Endothelial cell of umbilical vein (primary cell): ENCODE measurements at regions of chr1 and their contacts with region 1.

Region 1: GRCh38 chr1:192167911-192168700 is 9.8 kb downstream of the RGS18 start:
- DNase-seq: peak; percentile 69
- H3K4me3 ChIP-seq: no peak overlapping the region
- H3K27ac ChIP-seq: peak overlapping the region; percentile 98
- H3K4me1 ChIP-seq: peaks cover 37% of the 10 kb centered on the region
- H3K27me3 ChIP-seq: no peaks in the 10 kb centered on the region
- CTCF ChIP-seq: no peak
- POLR2A ChIP-seq: no peak

Region 2: DNA sequence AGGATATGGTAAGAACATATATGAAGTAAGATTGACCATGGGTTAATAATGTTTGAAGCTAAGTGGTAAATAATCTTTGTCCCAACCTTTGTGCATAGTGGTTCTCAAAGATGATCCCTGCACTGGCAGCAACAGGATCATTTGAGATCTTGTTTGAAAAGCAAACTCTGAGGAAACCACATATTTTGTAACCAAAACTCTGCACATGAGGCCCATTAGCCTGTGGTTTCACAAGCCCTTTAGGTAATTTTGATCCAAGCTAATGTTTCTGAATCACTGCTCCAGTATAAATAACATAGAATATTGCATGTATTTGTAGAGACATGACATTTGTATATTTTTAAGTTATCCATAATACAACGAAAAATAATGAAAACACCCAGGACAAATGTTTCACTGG is 157.7 kb before region 1 on chr1:
- CTCF ChIA-PET with region 1: no interaction called
- POLR2A ChIA-PET with region 1: no interaction called
- dilution Hi-C with region 1: no loop called
- intact Hi-C with region 1: loop called (anchors 5 kb)
- DNase-seq: no peak
- H3K4me3 ChIP-seq: no peak overlapping the region
- H3K27ac ChIP-seq: no peak overlapping the region
- H3K4me1 ChIP-seq: no peaks in the 10 kb centered on the region
- H3K27me3 ChIP-seq: no peaks in the 10 kb centered on the region
- CTCF ChIP-seq: no peak
- POLR2A ChIP-seq: no peak

Region 3: GRCh38 chr1:192225703-192226102 is 57.6 kb after region 1 on chr1:
- CTCF ChIA-PET with region 1: interaction called, 3 read pairs
- POLR2A ChIA-PET with region 1: no interaction called
- dilution Hi-C with region 1: no loop called
- intact Hi-C with region 1: loop called (anchors 5 kb)
- DNase-seq: peak; percentile 73
- H3K4me3 ChIP-seq: no peak overlapping the region
- H3K27ac ChIP-seq: peak overlapping the region; percentile 47
- H3K4me1 ChIP-seq: peaks cover 12% of the 10 kb centered on the region
- H3K27me3 ChIP-seq: no peaks in the 10 kb centered on the region
- CTCF ChIP-seq: no peak
- POLR2A ChIP-seq: no peak

Region 4: DNA sequence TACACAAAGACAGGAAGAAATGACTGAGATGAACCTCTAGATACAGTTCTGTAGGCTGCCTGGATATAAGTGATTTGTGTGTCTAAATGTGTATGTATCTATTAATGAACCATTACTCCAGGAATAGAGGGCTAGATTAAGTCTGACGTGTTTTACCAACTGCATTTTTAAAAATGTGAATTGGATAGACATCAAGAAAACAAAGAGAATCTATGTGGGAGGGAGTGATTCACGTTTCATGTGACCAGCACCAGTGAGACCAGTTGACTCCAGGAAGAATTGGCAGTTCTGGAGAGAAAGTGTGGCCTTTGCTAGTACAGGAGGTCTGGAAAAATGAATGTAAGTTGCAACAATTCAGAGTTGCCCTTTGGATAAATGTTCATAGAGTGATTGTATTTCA is 95.3 kb after region 1 on chr1:
- CTCF ChIA-PET with region 1: interaction called, 3 read pairs
- POLR2A ChIA-PET with region 1: no interaction called
- dilution Hi-C with region 1: no loop called
- intact Hi-C with region 1: loop called (anchors 1 kb)
- DNase-seq: peak; percentile 88
- H3K4me3 ChIP-seq: no peak overlapping the region
- H3K27ac ChIP-seq: peak overlapping the region; percentile 83
- H3K4me1 ChIP-seq: peaks cover 28% of the 10 kb centered on the region
- H3K27me3 ChIP-seq: no peaks in the 10 kb centered on the region
- CTCF ChIP-seq: no peak
- POLR2A ChIP-seq: no peak